ENCODE measurements at regions of chr22 and their contacts with region 1.

Region 1: DNA sequence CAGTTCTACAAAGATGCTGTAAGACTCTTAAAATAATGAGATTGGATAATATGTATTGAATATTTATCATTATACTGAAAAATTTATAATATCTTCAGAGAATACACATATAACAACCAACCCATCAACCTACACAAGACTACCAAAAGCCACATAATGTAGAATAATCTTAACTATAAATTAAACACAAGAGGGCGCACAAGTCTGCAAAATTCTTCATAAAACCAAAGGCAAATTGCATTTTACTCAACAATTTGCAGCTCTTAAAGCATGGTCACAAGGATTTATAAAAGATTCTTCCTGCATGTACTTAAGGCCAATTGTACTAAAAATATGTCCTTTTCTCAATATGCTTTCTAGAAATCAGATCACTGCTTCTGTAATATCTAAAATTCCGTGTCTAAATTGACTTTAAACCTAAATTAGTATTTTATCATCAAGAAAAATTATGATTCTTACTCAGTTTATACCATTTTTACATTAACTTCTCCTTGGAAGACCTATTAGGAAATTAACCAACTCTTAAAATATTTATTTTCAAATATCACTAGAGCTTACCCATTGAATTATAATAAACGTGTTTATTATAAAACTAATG is 79.0 kb downstream of the TTC28 start:
- DNase-seq: no peak
- H3K4me3 Mint-ChIP-seq: no peak overlapping the region
- H3K27ac Mint-ChIP-seq: no peak overlapping the region
- H3K4me1 Mint-ChIP-seq: no peaks in the 10 kb centered on the region
- H3K27me3 Mint-ChIP-seq: peaks cover 36% of the 10 kb centered on the region

Region 2: GRCh38 chr22:28466399-28466798 is 134.2 kb before region 1 on chr22:
- intact Hi-C with region 1: no loop called
- DNase-seq: no peak
- H3K4me3 Mint-ChIP-seq: no peak overlapping the region
- H3K27ac Mint-ChIP-seq: no peak overlapping the region
- H3K4me1 Mint-ChIP-seq: no peaks in the 10 kb centered on the region
- H3K27me3 Mint-ChIP-seq: peaks cover 5% of the 10 kb centered on the region

Region 3: GRCh38 chr22:28741758-28742561 is 141.3 kb after region 1 on chr22 and contains the starts of genes CHEK2 and HSCB:
- intact Hi-C with region 1: loop called (anchors 1 kb)
- DNase-seq: peak; percentile 97
- H3K4me3 Mint-ChIP-seq: peak within 1 kb of the TSS; percentile 86
- H3K27ac Mint-ChIP-seq: peak within 1 kb of the TSS; percentile 70
- H3K4me1 Mint-ChIP-seq: peaks cover 42% of the 10 kb centered on the region
- H3K27me3 Mint-ChIP-seq: no peaks in the 10 kb centered on the region
- total RNA-seq, gene CHEK2: 31.4 and 35.0 TPM in 2 replicates
- total RNA-seq, gene HSCB: 16.6 and 18.0 TPM in 2 replicates

Region 4: GRCh38 chr22:28855355-28856094 is 254.9 kb after region 1 on chr22:
- intact Hi-C with region 1: loop called (anchors 1 kb)
- DNase-seq: peak; percentile 11
- H3K4me3 Mint-ChIP-seq: no peak overlapping the region
- H3K27ac Mint-ChIP-seq: no peak overlapping the region
- H3K4me1 Mint-ChIP-seq: no peaks in the 10 kb centered on the region
- H3K27me3 Mint-ChIP-seq: peaks cover 8% of the 10 kb centered on the region

Region 5: DNA sequence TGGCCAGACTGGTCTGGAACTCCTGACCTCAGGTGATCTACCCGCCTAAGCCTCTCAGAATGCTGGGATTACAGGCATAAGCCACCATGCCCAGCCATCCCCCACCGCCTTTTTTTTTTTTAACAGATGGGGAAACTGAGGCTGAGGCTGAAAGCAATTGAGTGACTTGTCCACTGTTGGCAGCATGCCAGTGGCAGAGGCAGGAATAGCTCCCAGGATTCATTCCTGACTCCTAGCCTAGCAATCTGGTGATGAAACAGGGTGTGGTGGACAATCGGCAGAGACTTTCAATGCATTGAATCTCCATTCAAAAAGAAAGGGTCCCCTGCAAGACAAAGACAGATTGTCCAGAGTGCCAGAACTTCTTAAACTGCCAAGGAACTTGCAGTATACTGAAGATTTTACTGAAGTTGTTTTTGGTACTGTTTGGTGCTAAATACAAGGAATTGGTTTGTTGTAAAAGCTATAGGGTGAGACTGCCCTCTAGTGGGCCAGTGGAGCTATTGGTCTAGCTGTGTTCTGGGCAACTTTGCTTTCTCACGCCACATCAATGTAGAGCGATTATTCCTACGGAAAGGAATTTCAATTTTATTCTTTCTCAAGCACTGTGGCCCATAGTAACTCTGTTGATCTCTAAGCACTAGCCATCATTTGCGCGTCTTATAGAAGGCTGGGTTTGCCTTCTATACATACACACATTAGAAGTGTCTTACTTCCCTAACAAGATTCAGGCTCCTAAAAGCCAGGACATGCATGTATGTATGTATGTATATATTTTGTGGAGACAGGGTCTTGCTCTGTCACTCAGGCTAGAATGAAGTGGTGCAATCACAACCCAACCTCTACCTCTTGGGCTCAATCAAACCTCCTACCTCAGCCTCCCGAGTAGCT is 440.0 kb after region 1 on chr22:
- intact Hi-C with region 1: loop called (anchors 1 kb)
- DNase-seq: peak; percentile 44
- H3K4me3 Mint-ChIP-seq: no peak overlapping the region
- H3K27ac Mint-ChIP-seq: no peak overlapping the region
- H3K4me1 Mint-ChIP-seq: no peaks in the 10 kb centered on the region
- H3K27me3 Mint-ChIP-seq: peaks cover 12% of the 10 kb centered on the region

Region 6: DNA sequence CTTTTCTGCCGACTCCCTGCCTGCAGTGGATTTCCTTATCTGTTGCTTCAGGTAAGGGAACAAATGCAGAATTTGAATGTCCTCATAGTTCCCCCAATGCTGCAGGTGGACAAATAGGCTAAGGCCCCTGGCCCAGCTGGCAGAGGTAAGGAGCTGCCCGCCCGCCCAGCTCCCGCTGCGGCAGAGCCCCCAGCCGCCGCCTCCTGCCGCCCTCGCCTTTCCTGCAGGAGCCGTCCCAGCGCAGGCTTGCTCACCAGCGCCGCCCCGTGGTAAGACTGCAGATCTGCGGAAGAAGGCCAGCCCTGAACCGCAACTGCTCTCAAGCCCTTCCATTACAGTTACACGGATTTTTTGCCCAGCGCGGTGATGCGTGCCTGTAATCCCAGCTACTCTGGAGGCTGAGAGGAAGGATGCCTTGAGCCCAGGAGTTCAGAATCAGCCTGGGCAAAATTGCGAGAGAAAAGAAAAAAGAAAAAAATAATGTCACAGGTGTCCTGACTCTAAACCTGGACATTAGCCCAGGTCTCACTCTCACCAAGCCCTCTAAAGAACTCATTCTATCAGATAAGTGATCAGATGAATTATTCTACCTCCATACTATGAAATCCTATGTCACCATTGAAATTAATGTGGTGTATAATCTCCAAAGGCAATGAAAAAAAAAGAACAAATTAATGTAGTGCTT is 553.9 kb after region 1 on chr22:
- intact Hi-C with region 1: loop called (anchors 1 kb)
- DNase-seq: peak; percentile 64
- H3K4me3 Mint-ChIP-seq: no peak overlapping the region
- H3K27ac Mint-ChIP-seq: no peak overlapping the region
- H3K4me1 Mint-ChIP-seq: peaks cover 8% of the 10 kb centered on the region
- H3K27me3 Mint-ChIP-seq: peaks cover 21% of the 10 kb centered on the region